Activated T-helper 2 cell treated with anti-CD3 and anti-CD28 coated beads, Interferon-gamma antibody, Interleukin-2, Interleukin-4, amounts not matched to agents 10 μg/mL and 5 μg/mL and 100 μg/mL, durations not matched to agents 14 hours and 24 hours and 36 hours (primary cell): ENCODE measurements at regions of chr10 and their contacts with region 1.

Region 1: DNA sequence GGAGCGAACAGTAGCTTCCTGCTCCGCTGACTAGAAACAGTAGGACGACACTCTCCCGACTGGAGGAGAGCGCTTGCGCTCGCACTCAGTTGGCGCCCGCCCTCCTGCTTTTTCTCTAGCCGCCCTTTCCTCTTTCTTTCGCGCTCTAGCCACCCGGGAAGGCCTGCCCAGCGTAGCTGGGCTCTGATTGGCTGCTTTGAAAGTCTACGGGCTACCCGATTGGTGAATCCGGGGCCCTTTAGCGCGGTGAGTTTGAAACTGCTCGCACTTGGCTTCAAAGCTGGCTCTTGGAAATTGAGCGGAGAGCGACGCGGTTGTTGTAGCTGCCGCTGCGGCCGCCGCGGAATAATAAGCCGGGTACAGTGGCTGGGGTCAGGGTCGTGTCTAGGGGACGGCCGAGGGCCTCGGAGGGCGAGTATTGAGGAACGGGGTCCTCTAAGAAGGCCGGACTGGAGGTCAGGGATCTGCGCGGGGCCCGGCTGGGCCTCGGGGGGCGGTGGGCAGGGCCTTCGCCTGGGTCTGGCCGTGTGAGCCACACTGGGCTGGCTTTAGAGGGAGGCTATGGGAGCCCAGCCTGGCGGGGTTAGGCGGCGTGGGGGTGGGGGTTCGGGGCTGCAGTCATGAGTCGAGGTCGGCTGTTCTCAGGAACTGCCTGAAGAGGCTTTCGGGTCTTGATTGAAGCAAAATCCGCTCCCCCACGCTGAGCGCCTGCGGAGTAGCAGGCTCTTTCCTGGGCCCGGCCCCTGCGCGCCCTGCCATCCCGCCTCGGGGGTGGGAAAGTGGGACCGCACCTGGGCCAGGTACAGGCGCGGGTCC is at the start of gene CDK1:
- DNase-seq: peak; percentile 98
- H3K4me3 Mint-ChIP-seq: peak within 1 kb of the TSS; percentile 100
- H3K27ac Mint-ChIP-seq: peak within 1 kb of the TSS; percentile 98
- H3K4me1 Mint-ChIP-seq: peaks cover 38% of the 10 kb centered on the region
- H3K27me3 Mint-ChIP-seq: no peaks in the 10 kb centered on the region
- total RNA-seq, gene CDK1: 89.1 and 91.4 TPM in 2 replicates

Region 2: DNA sequence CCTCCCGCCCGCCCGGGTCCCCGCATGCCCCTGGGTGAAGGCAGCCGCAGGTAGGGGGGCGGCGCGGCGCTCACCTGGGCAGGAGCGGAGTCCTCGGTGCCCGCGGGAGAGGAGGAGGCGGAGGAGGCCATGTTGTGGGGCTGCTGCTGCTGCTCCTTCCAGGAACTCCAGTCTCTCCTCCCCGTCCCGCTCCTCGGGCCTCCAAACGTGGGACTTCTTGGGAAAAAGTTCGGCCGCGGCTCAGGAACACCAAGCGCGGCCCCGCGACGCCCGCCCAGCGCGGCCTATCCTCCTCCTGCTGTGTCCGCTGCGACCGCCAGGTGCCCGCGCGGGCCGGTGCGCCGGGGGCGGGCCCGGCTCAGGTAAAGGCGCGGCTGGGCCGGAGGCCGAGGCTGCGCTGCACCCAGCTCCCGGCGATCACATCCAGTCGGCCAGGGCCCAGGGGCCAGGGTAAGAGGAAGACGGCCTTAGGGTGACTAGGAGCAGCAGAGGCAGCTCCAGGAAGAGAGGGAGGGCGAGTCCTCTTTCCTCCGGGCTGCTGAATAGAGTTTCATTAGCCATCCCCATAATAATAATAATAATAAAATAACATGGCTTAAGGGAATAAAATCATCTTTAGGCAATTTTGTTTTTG is 45.1 kb before region 1 on chr10:
- intact Hi-C with region 1: loop called (anchors 1 kb)
- DNase-seq: peak; percentile 28
- H3K4me3 Mint-ChIP-seq: no peak overlapping the region
- H3K27ac Mint-ChIP-seq: no peak overlapping the region
- H3K4me1 Mint-ChIP-seq: peaks cover 31% of the 10 kb centered on the region
- H3K27me3 Mint-ChIP-seq: peaks cover 4% of the 10 kb centered on the region

Region 3: DNA sequence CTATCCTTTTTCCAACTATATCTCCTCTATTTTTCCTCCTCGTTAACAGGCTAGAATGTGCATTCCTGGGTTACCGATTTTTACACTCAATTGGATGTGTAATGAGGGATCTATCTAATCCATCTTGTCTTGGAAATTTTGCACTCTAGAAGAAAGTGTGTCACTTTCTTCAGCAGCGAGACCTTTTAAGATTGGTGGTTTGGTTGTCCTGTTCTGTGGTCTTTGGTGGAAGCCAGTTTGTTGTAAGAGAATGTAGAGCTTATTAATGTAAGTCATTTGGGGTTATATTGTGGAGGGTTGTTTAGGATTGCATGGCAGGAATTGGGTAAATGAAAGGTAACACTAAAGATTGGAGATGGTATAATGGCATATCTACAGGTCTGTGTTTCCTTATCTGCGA is 16.5 kb after region 1 on chr10:
- intact Hi-C with region 1: no loop called
- DNase-seq: no peak
- H3K4me3 Mint-ChIP-seq: no peak overlapping the region
- H3K27ac Mint-ChIP-seq: no peak overlapping the region
- H3K4me1 Mint-ChIP-seq: peaks cover 24% of the 10 kb centered on the region
- H3K27me3 Mint-ChIP-seq: no peaks in the 10 kb centered on the region

Region 4: DNA sequence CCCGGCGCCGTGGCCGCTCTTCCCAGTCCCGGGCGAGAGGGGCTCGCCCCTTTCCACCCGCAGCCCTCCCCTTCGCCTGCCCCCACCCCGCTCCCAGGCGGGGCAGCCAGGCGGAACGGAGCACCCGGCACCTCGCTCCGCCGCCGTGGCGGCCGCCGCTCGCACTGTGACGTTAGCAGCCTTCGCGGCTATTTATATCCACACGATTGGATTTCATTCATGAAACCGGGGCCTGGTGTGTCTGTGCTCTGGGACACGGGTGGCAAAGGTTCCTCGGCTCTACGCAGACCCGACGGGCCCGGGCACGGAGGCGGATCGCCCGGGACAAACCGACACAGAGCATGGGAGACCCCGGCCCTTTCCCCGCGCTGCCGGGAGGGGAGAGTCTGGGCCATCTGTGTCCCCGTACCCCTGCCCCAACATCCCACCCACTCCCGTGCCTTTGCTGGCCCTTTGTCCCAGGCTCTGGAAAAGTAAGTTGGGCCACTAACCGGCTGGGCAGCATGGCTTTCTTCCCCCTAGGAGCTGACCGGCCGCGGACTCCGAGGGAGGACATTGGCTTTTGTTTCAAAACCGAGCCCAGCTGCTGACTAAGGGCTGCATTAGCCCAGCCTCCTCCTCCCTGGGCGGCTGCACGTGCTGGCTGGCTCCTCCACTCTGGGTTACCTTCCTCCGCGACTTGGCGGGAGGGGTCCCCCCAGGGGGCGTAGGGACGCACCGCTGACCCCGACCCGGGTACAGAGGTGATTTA is 165.9 kb after region 1 on chr10 and contains the start of gene RHOBTB1:
- intact Hi-C with region 1: loop called (anchors 5 kb)
- DNase-seq: peak; percentile 20
- H3K4me3 Mint-ChIP-seq: peak within 1 kb of the TSS; percentile 76
- H3K27ac Mint-ChIP-seq: peak within 1 kb of the TSS; percentile 21
- H3K4me1 Mint-ChIP-seq: peaks cover 9% of the 10 kb centered on the region
- H3K27me3 Mint-ChIP-seq: peaks cover 74% of the 10 kb centered on the region
- total RNA-seq, gene RHOBTB1: 0.05 and 0.30 TPM in 2 replicates